Activated naive CD4-positive, alpha-beta T cell treated with anti-CD3 and anti-CD28 coated beads for 36 hours (primary cell): ENCODE measurements at regions of chr7 and their contacts with region 1.

Region 1: GRCh38 chr7:76201730-76202665 is at the start of gene SRRM3:
- DNase-seq: peak; percentile 85
- H3K4me3 Mint-ChIP-seq: no peak within 1 kb of the TSS
- H3K27ac Mint-ChIP-seq: no peak within 1 kb of the TSS
- H3K4me1 Mint-ChIP-seq: no peaks in the 10 kb centered on the region
- H3K27me3 Mint-ChIP-seq: peaks cover 25% of the 10 kb centered on the region
- total RNA-seq, gene SRRM3: not detected

Region 2: DNA sequence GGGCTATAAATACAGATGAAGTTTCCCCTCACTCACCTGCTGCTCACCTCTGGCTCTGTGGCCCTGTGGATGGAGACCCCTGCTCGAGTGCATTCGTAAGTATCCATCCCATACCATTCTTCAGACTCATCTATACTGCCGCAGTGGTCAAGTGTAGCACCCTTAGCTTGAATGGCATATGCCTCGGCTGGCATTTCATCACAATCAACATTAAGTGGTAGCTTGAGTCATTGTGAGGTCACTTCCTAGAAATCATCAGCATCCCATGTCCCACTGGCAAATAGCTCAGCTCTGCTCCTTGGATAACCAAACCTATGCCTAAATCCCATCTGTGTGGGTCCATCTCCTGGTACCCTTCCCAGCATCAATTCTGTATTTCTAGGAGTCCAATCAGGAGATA is 115.9 kb before region 1 on chr7:
- CTCF ChIA-PET with region 1: no interaction called
- intact Hi-C with region 1: no loop called
- DNase-seq: no peak
- H3K4me3 Mint-ChIP-seq: no peak overlapping the region
- H3K27ac Mint-ChIP-seq: no peak overlapping the region
- H3K4me1 Mint-ChIP-seq: no peaks in the 10 kb centered on the region
- H3K27me3 Mint-ChIP-seq: no peaks in the 10 kb centered on the region

Region 3: DNA sequence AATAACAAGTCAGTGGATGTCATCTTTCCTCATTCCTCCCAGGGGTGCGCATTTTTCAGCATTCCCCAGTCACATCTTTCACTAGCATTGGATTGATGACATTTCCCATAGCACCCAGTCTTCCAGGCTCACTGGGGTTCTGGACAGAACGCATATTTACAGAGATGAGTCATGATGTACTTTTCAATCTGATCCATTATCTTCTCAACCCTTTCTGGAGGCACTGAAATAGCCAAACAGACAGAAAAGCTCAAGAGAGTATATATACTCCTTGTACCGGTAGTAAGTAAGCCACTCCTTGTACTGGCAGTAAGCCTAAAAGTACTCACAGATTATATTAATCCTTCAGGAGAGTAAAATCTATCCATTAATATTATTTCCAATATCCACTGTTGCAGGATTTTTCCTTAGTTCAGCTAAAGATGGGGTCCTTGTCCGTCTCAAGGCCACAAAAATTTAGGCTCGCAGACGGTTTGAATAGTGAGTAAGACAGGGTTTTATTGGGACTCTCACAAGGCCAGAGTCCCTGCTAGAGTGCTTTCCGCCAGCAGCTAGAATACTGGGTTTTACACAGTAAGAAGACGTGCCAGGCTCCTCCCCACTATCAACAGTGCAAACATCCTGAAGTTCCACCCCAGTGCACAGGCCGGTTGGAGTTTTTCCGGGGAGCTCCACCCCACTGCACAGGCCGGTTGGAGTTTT is 93.3 kb before region 1 on chr7:
- CTCF ChIA-PET with region 1: no interaction called
- intact Hi-C with region 1: no loop called
- DNase-seq: no peak
- H3K4me3 Mint-ChIP-seq: no peak overlapping the region
- H3K27ac Mint-ChIP-seq: no peak overlapping the region
- H3K4me1 Mint-ChIP-seq: peaks cover 2% of the 10 kb centered on the region
- H3K27me3 Mint-ChIP-seq: no peaks in the 10 kb centered on the region

Region 4: DNA sequence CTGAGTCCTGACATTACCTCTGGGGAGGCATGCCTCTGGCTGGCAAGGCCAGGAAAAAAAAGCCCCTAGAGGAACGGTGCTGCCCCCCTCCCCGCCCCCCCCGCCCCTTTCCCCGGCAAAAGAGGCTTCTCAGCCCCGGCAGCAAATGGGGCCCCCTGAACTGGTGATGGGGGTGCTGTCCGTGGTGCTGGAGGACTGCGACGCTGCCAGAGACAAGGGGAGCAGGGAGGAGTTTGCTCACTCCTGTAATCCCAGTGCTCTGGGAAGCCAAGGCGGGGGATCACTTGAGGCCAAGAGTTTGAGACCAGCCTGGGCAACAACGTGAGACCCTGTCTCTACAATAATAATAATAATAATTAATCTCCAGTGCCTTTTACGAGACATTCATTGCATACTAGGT is 23.4 kb after region 1 on chr7:
- CTCF ChIA-PET with region 1: no interaction called
- intact Hi-C with region 1: loop called (anchors 1 kb)
- DNase-seq: peak; percentile 55
- H3K4me3 Mint-ChIP-seq: no peak overlapping the region
- H3K27ac Mint-ChIP-seq: no peak overlapping the region
- H3K4me1 Mint-ChIP-seq: no peaks in the 10 kb centered on the region
- H3K27me3 Mint-ChIP-seq: peaks cover 32% of the 10 kb centered on the region

Region 5: DNA sequence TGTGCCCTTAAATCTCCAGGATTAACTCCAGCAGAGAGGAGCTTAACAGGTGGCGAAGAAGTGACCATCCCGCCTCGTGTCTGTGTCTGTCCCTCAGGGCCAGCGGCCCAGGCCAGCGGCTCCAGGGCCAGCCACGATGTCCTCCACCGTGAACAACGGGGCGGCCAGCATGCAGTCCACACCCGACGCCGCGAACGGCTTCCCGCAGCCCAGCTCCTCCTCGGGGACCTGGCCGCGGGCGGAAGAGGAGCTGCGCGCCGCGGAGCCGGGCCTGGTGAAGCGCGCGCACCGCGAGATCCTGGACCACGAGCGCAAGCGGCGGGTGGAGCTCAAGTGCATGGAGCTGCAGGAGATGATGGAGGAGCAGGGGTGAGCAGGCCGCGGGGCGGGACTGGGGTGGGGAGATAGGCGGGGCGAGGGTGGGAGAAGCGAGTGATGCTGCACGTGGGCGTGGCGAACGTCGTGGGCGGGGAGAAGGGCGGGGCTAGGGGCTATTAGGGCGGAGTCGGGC is 33.0 kb after region 1 on chr7:
- CTCF ChIA-PET with region 1: interaction called, 3 read pairs
- intact Hi-C with region 1: loop called (anchors 2 kb)
- DNase-seq: peak; percentile 90
- H3K4me3 Mint-ChIP-seq: peak overlapping the region; percentile 39
- H3K27ac Mint-ChIP-seq: no peak overlapping the region
- H3K4me1 Mint-ChIP-seq: peaks cover 4% of the 10 kb centered on the region
- H3K27me3 Mint-ChIP-seq: peaks cover 56% of the 10 kb centered on the region

Region 6: GRCh38 chr7:76262683-76263402 is 60.8 kb after region 1 on chr7:
- CTCF ChIA-PET with region 1: no interaction called
- intact Hi-C with region 1: loop called (anchors 2 kb)
- DNase-seq: peak; percentile 60
- H3K4me3 Mint-ChIP-seq: no peak overlapping the region
- H3K27ac Mint-ChIP-seq: no peak overlapping the region
- H3K4me1 Mint-ChIP-seq: peaks cover 4% of the 10 kb centered on the region
- H3K27me3 Mint-ChIP-seq: peaks cover 21% of the 10 kb centered on the region